Activated T-helper 1 cell treated with anti-CD3 and anti-CD28 coated beads, Interleukin-12 subunit alpha, Interleukin-12 subunit beta, Interleukin-2, Interleukin-4 antibody, amounts not matched to agents 30 ng/mL and 10 ng/mL and 1 ng/mL, durations not matched to agents 14 hours and 24 hours and 36 hours (primary cell): ENCODE measurements at regions of chr14 and their contacts with region 1.

Region 1: DNA sequence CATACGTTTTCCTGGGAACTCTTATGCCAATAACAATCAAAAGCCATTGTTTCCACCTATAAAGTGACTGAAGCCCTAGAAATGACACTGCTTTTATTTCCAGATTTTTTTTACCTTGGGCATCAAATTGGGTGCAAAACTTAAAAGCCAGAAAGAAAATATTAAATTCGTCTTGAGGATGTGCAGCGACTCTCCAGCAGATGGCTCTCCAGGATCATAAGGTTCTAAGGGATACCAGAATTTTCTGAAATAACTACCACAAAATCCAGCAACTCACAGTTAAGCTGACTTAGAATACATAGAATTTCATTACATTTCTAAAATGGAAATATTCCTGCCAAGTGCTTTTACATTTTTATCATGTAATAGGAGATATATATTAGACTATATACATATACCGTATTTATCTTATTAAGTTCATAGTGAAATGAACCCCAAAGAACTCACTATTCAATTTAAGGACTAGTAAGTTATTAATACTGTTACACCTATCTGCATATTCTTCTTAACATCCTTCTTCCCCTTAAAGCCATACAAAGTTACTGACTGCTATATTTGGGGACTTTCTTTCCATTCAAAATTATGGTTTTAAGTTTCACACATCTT is 44.0 kb downstream of the ARMH4 start:
- DNase-seq: peak; percentile 2
- H3K4me3 Mint-ChIP-seq: no peak overlapping the region
- H3K27ac Mint-ChIP-seq: no peak overlapping the region
- H3K4me1 Mint-ChIP-seq: no peaks in the 10 kb centered on the region
- H3K27me3 Mint-ChIP-seq: peaks cover 16% of the 10 kb centered on the region

Region 2: DNA sequence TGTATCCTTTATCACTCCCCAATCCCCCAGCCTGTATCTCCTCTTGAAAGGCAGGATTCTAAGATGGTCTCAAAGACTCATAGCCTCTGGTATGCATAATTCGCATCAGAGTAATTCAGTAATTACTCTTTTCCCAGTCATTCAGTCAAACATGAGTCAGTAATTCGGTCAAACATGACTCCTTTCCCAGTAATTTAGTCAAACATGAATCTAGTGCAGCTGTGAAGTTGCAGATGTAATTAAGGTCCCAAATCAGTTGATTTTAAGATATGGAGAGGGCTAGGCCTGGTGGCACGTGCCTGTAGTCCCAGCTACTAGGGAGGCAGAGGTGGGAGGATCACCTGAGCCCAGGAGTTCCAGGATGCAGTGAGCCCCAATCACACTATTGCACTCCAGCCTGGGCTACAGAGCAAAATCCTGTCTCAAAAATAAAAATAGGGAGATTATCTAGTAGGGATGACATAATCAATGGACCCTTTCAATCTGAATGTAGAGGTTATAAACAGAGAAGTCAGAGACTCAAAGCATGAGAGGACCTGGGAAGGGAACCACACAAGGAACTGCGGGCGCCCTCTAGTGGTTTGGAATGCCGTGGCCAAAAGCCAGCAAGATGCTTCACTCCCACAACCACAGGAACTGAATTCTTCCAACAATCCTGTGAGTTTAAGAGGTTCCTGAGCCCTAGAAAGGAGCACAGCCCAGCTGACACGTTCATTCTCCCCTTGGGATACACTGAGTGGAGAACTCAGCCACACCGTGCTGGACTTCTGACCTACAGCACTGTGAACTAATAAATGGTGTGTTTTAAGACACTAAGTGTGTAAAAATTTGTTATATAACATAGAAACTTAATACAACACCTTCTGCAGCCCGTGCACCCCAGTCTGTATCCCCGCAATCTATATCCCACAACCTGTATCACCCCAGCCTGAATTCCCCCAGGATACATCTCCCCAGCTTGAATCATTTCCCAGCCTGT is 58.2 kb after region 1 on chr14:
- intact Hi-C with region 1: loop called (anchors 1 kb)
- DNase-seq: peak; percentile 40
- H3K4me3 Mint-ChIP-seq: no peak overlapping the region
- H3K27ac Mint-ChIP-seq: no peak overlapping the region
- H3K4me1 Mint-ChIP-seq: peaks cover 9% of the 10 kb centered on the region
- H3K27me3 Mint-ChIP-seq: peaks cover 10% of the 10 kb centered on the region

Region 3: GRCh38 chr14:58362798-58363412 is 254.9 kb after region 1 on chr14:
- intact Hi-C with region 1: loop called (anchors 2 kb)
- DNase-seq: no peak
- H3K4me3 Mint-ChIP-seq: no peak overlapping the region
- H3K27ac Mint-ChIP-seq: no peak overlapping the region
- H3K4me1 Mint-ChIP-seq: no peaks in the 10 kb centered on the region
- H3K27me3 Mint-ChIP-seq: no peaks in the 10 kb centered on the region

Region 4: GRCh38 chr14:58395812-58396788 is 288.1 kb after region 1 on chr14 and contains the start of gene TOMM20L:
- intact Hi-C with region 1: loop called (anchors 5 kb)
- DNase-seq: peak; percentile 66
- H3K4me3 Mint-ChIP-seq: peak within 1 kb of the TSS; percentile 67
- H3K27ac Mint-ChIP-seq: peak within 1 kb of the TSS; percentile 7
- H3K4me1 Mint-ChIP-seq: peaks cover 13% of the 10 kb centered on the region
- H3K27me3 Mint-ChIP-seq: peaks cover 6% of the 10 kb centered on the region
- total RNA-seq, gene TOMM20L: not detected in 2 replicates

Region 5: DNA sequence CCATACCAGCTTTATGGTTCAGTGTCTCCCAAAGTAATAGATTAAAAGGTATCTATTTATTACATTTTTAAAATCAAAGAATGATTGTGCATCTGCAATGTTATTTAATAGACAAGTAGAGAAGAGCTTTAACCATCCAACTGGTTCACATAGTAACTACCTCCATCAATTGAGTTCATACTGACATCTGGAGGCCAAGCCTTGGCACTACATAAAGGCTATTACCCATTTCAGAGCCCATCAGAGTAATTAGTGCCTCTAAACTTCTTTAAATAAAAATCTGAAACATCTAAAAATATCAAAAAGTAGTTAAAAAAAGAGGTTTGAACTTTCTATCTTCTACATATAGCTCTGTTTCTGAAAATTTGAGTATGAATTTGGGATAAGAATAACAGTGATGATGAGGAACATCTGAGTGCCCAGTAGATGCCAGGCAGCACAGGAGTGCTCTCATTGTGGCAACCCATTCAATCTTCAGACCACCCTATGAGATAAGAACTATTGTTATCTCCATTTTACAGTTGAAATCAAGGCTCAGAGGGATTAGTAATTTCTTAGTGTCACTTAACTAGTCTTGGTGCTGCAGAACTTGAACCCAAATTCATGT is 947.5 kb after region 1 on chr14:
- intact Hi-C with region 1: loop called (anchors 5 kb)
- DNase-seq: no peak
- H3K4me3 Mint-ChIP-seq: no peak overlapping the region
- H3K27ac Mint-ChIP-seq: no peak overlapping the region
- H3K4me1 Mint-ChIP-seq: no peaks in the 10 kb centered on the region
- H3K27me3 Mint-ChIP-seq: no peaks in the 10 kb centered on the region